HEK293 (cell line): ENCODE measurements at regions of chr19 and their contacts with region 1.

Region 1: DNA sequence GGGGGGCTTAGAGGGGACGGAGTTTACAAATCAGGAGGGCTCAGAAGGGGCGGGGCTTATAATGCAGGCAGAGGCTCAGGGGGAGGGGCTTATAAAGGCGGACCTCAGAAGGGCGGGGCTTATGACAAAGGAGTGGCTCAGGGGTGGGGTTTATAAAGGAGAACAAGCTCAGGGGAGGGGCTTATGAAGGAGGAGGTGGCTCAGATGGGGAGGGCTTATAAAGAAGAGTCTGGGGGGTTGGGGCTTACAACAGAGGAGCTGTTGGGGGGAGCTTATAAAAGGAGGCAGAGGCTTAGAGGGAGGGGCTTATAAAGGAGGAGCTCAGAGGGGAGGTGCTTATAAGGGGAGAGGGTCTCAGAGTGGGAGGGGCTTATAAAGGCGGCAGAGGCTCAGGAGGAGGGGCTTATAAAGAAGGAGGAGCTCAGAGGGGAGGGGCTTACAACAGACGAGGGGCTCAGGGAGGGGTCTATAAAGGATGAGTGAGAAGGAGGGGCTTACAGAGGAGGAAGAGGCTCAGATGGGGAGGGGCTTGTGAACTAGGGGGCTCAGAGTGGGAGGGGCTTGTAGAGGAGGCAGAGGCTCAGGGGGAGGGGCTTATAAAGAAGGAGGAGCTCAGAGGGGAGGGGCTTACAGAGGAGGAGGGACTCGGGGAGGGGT is 1.0 kb downstream of the SMIM24 start:
- H3K4me3 ChIP-seq: no peak overlapping the region
- H3K27ac ChIP-seq: no peak overlapping the region
- H3K4me1 ChIP-seq: no peaks in the 10 kb centered on the region
- CTCF ChIP-seq: no peak

Region 2: DNA sequence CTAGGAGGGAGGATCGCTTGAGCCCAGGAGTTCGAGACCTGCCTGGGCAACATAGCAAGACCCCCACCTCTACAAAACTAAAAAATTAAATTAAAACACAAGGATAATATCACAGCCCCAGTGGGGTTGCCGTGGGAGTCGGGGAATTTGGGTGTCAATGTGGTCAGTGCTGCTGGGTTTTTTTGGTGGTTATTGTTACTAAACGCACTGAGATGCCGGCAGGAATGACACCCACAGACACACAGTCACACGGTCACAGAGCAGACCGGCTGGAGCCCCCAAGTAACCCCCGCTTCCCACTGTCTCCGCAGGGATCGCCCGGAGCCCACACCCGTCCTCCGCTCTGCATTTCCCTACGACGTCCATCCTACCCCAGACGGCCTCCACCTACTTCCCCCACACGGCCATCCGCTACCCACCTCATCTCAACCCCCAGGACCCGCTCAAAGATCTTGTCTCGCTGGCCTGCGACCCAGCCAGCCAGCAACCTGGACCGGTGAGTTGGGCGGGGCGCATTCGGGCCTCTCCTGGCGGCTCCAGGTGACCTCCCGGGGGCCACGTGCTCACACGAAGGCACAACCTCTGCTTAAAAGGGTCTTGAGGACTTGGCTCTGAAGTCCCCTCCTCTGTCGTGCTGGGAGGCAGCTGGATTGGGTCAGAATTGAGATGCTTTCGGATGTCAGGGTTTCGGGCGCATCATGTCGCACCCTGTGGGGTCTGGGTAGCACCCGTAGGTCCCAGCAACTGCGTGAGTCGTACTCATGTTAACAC is 26.9 kb before region 1 on chr19:
- CTCF ChIA-PET with region 1: no interaction called
- POLR2A ChIA-PET with region 1: no interaction called
- H3K4me3 ChIP-seq: no peak overlapping the region
- H3K27ac ChIP-seq: no peak overlapping the region
- H3K4me1 ChIP-seq: no peaks in the 10 kb centered on the region; the same call in 1 of the 2 replicates
- CTCF ChIP-seq: no peak

Region 3: DNA sequence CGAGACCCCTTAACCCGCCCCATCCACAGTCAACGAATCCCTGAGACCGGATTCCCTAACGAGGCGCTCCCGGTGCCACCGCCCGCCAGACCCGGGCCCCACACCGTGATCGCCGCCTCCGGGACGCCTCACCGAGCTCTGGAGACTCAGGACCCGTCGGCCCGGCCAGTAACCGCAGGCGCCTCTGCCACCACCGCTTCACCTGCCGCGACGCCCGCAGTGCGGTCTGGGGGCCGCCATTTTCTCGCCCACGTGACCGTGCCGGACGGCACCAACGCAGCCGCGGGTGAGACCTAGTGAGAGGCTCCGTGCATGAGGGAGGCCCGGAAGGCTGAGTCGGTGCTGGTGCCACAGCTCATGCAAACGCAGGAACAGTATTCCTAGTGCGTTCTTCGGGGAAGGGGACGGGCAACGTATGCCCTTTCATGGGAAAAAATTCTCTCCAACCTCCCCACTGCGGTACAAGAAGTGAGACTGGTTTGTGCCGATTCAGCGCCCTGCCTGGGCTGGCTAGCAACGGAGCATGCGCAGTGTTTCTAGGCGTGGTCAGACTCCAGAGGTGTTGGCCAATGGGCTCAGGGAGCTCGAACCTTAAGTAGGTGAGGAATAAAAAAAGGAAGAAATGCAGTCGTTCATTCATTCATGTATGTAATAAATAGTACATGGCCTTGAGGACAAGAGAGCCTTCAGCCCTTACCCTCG is 21.3 kb after region 1 on chr19 and contains the start of gene DOHH:
- CTCF ChIA-PET with region 1: interaction called, 12 read pairs
- POLR2A ChIA-PET with region 1: interaction called, 7 read pairs
- H3K4me3 ChIP-seq: peak within 1 kb of the TSS; percentile 91
- H3K27ac ChIP-seq: peak within 1 kb of the TSS; percentile 84
- H3K4me1 ChIP-seq: peaks cover 2% of the 10 kb centered on the region
- CTCF ChIP-seq: no peak

Region 4: GRCh38 chr19:3599776-3600183 is 120.5 kb after region 1 on chr19:
- CTCF ChIA-PET with region 1: no interaction called
- POLR2A ChIA-PET with region 1: no interaction called
- H3K4me3 ChIP-seq: no peak overlapping the region
- H3K27ac ChIP-seq: no peak overlapping the region
- H3K4me1 ChIP-seq: no peaks in the 10 kb centered on the region
- CTCF ChIP-seq: no peak